ENCODE measurements at regions of chr2 and their contacts with region 1.

Region 1: GRCh38 chr2:60881047-60881932 is at the start of gene REL:
- DNase-seq: peak; percentile 94
- H3K4me3 Mint-ChIP-seq: peak within 1 kb of the TSS; percentile 100
- H3K27ac Mint-ChIP-seq: peak within 1 kb of the TSS; percentile 98
- H3K4me1 Mint-ChIP-seq: peaks cover 21% of the 10 kb centered on the region
- H3K27me3 Mint-ChIP-seq: no peaks in the 10 kb centered on the region
- total RNA-seq, gene REL: 40.3 to 40.5 TPM

Region 2: GRCh38 chr2:60756191-60757041 is 124.9 kb before region 1 on chr2 and contains the start of gene PAPOLG:
- CTCF ChIA-PET with region 1: no interaction called
- intact Hi-C with region 1: loop called (anchors 2 kb)
- DNase-seq: peak; percentile 99
- H3K4me3 Mint-ChIP-seq: peak within 1 kb of the TSS; percentile 99
- H3K27ac Mint-ChIP-seq: peak within 1 kb of the TSS; percentile 97
- H3K4me1 Mint-ChIP-seq: peaks cover 40% of the 10 kb centered on the region
- H3K27me3 Mint-ChIP-seq: no peaks in the 10 kb centered on the region
- total RNA-seq, gene PAPOLG: 14.1 to 16.1 TPM

Region 3: GRCh38 chr2:60832621-60833020 is 48.7 kb before region 1 on chr2:
- CTCF ChIA-PET with region 1: interaction called, 4 read pairs
- intact Hi-C with region 1: loop called (anchors 2 kb)
- DNase-seq: no peak
- H3K4me3 Mint-ChIP-seq: no peak overlapping the region
- H3K27ac Mint-ChIP-seq: peak overlapping the region; percentile 15
- H3K4me1 Mint-ChIP-seq: peaks cover 42% of the 10 kb centered on the region
- H3K27me3 Mint-ChIP-seq: no peaks in the 10 kb centered on the region

Region 4: GRCh38 chr2:60899230-60899891 is 18.1 kb after region 1 on chr2:
- CTCF ChIA-PET with region 1: interaction called, 4 read pairs
- intact Hi-C with region 1: loop called (anchors 1 kb)
- DNase-seq: peak; percentile 77
- H3K4me3 Mint-ChIP-seq: peak overlapping the region; percentile 24
- H3K27ac Mint-ChIP-seq: peak overlapping the region; percentile 90
- H3K4me1 Mint-ChIP-seq: peaks cover 51% of the 10 kb centered on the region
- H3K27me3 Mint-ChIP-seq: no peaks in the 10 kb centered on the region

Region 5: GRCh38 chr2:60976875-60977561 is 95.7 kb after region 1 on chr2:
- CTCF ChIA-PET with region 1: interaction called, 4 read pairs
- intact Hi-C with region 1: loop called (anchors 1 kb)
- DNase-seq: peak; percentile 48
- H3K4me3 Mint-ChIP-seq: no peak overlapping the region
- H3K27ac Mint-ChIP-seq: peak overlapping the region; percentile 69
- H3K4me1 Mint-ChIP-seq: peaks cover 53% of the 10 kb centered on the region
- H3K27me3 Mint-ChIP-seq: no peaks in the 10 kb centered on the region

Region 6: DNA sequence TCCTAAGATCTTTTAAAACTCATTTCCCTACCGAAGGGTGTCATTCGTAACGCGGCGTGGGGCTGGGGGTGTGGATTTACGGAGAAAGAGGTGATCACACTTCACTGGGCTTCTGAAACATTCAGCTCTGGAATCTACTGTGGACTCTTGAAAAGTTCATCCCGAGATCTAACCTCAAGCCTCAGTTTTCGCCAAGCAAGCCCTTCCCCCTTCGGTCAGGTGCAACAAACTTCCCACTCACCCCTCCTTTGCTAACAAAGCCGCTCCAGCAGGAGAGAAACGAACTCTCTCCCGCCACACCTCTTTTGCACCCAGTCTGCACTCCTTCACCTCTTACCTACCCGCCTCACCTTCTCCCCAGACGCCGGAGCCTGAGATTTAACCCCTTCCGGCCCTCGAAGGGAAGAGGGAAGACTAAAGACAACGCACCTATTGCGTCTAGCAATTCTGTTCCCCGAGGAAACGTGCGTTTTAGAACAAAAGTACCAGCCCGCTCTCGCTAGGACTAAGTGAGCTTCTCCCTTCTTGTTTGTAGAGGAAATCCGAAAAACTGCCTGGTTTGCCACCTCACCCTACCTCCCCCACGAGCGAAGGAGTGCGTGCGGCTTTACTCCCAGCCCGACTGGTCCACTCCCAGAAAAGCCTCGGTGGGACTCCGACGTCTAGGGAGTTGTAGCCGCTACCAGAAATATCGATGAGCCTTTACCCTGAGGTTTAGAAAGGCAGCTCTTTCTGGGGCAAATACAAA is 135.7 kb after region 1 on chr2:
- CTCF ChIA-PET with region 1: interaction called, 3 read pairs
- intact Hi-C with region 1: loop called (anchors 2 kb)
- DNase-seq: peak; percentile 82
- H3K4me3 Mint-ChIP-seq: peak overlapping the region; percentile 98
- H3K27ac Mint-ChIP-seq: peak overlapping the region; percentile 95
- H3K4me1 Mint-ChIP-seq: peaks cover 43% of the 10 kb centered on the region
- H3K27me3 Mint-ChIP-seq: no peaks in the 10 kb centered on the region

Region 7: DNA sequence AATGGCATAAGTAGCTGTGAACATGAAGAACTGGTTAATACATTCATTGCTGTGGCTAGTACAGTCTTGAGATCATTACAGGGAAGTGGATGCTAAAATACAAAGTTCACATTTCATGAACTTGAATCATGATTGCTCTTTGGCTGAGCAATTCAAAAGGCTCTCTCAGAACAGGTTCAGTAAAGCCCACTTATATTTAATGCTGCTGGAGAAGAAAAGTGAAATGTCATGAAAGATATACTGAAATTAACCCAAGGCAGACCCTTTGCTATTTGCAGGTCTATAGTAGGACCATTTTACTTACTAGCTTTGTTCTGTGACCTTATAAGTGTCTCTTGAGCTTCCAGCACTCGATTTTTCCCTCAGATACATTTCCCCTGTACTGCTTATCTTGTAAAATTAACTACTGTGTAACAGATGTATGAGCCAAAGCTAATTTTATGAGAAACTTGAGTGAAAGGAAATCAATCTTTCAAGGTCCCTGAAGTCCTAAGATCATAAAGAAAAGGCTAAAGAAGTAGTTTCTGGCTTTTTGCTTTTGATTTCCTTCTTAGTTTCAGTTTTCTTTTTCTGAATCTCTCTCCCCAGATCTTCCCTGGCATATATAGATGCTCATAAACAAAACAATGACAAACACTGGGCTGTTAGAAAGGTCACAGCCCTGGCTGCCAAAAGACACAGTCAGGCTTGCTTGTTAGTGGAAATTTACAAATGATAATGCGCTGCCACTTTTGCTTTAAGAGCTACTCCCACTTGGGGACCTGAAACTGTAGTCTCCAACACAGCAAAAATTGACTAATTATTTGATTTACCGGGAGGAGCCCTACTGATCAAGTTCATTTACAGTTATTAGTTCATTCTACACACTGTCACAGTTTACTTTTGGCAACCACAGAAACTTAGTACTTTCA is 789.6 kb after region 1 on chr2:
- CTCF ChIA-PET with region 1: no interaction called
- intact Hi-C with region 1: loop called (anchors 10 kb)
- DNase-seq: peak; percentile 51
- H3K4me3 Mint-ChIP-seq: peak overlapping the region; percentile 10
- H3K27ac Mint-ChIP-seq: peak overlapping the region; percentile 57
- H3K4me1 Mint-ChIP-seq: peaks cover 17% of the 10 kb centered on the region
- H3K27me3 Mint-ChIP-seq: no peaks in the 10 kb centered on the region